ENCODE measurements at regions of chr9 and their contacts with region 1.

Region 1: GRCh38 chr9:96478829-96479371 is 28.9 kb downstream of the HABP4 start:
- DNase-seq: no peak
- H3K4me3 Mint-ChIP-seq: no peak overlapping the region
- H3K27ac Mint-ChIP-seq: peak overlapping the region; percentile 50
- H3K4me1 Mint-ChIP-seq: peaks cover 19% of the 10 kb centered on the region
- H3K27me3 Mint-ChIP-seq: no peaks in the 10 kb centered on the region

Region 2: DNA sequence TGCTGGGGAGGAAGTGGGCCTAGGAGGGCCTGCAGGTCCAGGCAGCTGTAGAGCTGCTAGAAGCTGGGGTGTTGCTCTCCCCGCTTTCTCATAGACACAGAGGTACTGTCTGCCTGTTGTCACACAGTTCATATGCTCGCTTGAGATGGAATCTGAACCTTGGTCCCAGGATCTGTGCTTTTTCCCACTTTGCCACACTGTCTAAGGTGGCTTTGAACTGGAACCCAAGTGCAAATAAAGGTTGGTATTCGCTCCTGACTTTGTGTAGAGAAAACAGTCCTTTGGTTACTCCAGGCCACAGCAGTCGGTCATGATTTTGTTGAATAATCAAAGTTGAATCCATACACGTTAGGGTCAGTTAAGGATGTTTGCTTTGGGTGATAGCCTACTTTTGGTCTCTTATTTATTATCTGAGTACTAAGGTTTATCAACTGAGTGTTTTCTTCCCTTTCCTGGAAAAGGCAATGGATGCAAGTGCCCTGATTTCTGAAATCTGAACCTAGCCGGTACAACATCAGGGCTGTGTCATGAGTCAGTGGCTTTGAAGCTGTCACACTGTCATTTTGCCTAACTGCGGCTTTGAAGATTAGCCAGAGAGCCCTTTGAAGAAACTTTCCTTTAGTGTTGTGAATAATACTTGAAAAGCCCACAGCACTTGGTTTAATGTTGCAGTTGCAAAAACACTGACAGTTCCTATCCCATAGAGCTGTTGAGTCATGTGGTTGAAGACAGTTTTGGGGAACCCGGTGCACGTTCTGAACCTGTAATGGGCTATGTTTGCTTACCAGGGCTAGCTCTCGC is 12.4 kb after region 1 on chr9:
- intact Hi-C with region 1: loop called (anchors 1 kb)
- DNase-seq: no peak
- H3K4me3 Mint-ChIP-seq: no peak overlapping the region
- H3K27ac Mint-ChIP-seq: peak overlapping the region; percentile 78
- H3K4me1 Mint-ChIP-seq: peaks cover 9% of the 10 kb centered on the region
- H3K27me3 Mint-ChIP-seq: no peaks in the 10 kb centered on the region

Region 3: GRCh38 chr9:96553070-96553469 is 74.2 kb after region 1 on chr9:
- intact Hi-C with region 1: loop called (anchors 5 kb)
- DNase-seq: no peak
- H3K4me3 Mint-ChIP-seq: no peak overlapping the region
- H3K27ac Mint-ChIP-seq: no peak overlapping the region
- H3K4me1 Mint-ChIP-seq: peaks cover 39% of the 10 kb centered on the region
- H3K27me3 Mint-ChIP-seq: peaks cover 5% of the 10 kb centered on the region

Measured in activated T-helper 1 cell treated with anti-CD3 and anti-CD28 coated beads, Interleukin-12 subunit alpha, Interleukin-12 subunit beta, Interleukin-2, Interleukin-4 antibody, amounts not matched to agents 30 ng/mL and 10 ng/mL and 1 ng/mL, durations not matched to agents 14 hours and 24 hours and 36 hours (primary cell).